Aorta (tissue), 5 donors: ENCODE measurements at regions of chr3 and their contacts with region 1.

Region 1: DNA sequence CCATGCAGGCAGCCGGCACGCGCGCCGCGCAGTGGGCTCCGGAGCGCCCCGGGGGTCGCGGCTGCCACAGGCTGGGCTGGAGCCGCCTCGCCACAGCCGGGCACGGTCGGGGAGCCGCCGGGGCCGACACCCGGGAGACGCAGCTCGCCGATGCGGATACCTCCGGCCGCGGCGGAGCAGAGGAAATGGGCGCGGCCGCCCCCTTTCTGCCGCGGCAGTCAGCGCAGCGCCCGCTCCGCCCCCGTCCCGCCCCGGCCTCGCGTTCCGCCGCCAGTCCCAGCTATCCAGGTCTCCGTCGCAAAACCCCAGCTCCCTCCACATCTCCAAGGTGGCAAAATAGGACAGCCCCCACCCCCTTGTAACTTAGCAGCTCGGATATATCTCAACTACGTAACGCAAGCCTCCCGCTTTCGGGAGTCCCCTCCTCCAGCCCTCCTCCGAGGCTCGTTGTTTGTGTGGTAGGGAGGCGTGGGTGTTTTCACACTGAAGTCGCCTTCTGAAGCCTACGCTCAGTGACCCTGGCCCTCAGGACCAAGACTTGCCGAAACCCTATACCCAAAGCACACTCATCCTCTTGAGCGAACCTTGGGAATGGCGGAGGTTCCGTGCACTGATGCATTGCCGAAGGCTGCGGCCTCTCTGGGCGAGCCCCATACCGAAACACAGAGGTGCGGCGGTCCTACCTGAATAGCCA is at the start of gene SH3BP5:
- DNase-seq: peak; percentile 86 to 93
- ATAC-seq: peak; percentile 92
- H3K4me3 ChIP-seq: peak within 1 kb of the TSS; percentile 50 to 60
- H3K27ac ChIP-seq: peak within 1 kb of the TSS in 1 of 2 donors; percentile 41
- H3K4me1 ChIP-seq: no peaks in the 10 kb centered on the region
- H3K27me3 ChIP-seq: no peaks in the 10 kb centered on the region
- total RNA-seq, gene SH3BP5: 79.9 to 93.1 TPM

Region 2: DNA sequence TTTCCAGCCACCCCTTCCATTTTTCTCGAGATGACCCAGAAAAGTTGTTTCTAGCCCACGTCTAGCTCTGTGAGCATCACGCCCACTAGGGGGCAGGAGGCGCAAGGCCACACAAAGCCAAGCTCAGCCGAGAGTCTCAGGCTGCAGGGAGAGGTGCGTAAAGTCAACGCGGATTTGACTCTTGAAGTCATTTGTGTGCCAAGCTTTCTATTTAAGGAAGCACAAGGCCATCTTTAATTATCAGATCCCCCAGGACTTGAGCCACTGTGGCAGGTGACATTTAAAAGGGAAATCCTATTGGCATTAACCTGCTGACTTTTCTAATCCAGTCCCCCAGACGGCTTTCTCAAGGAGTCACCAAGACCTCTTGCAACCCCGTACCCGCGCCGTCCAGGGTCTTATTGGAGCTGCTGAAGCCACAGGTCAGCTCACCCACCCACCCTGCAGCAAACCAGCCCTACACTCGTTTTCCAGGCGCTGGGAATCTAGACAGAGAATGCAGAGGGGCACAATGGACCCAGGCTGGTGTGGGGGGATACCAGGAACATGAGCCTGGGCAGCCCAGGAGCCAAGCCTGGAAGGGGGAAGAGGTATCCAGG is 64.4 kb before region 1 on chr3:
- intact Hi-C with region 1: loop called (anchors 1 kb)
- DNase-seq: peak; percentile 92 to 95
- ATAC-seq: peak; percentile 88
- H3K4me3 ChIP-seq: no peak overlapping the region
- H3K27ac ChIP-seq: no peak overlapping the region
- H3K4me1 ChIP-seq: no peaks in the 10 kb centered on the region
- H3K27me3 ChIP-seq: no peaks in the 10 kb centered on the region

Region 3: DNA sequence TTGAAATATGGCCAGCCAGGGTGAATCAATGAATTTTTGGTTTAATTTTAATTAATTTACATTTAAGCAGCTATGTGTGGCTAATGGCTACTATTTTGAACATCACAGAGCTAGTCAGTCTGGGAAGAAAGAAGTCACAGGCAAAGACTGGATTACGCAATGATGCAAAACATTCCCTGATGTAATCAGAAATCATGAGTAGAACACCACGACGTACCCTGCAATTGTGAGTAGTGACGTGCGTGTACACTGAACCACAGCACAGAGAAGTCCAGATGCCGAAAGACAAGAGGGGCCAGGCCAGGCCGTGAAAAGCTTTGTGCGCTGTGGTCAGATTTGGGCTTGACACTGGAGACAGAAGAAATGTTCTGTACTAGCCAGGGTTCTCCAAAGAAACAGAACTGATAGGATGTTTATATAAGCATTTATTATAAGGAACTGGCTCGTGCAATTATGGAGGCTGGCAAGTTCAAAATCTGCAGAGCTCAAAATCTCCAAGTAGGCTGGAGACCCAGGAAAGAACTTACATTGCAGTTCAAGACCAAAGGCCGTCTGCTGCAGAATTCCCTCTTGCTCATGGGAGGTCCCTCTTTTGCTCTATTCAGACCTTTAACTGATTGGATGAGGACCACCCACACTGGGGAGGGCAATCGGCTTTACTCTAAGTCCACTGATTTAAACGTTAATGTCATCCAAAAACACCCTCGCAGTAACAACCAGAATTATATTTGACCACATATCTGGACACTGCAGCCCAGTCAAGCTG is 44.8 kb before region 1 on chr3:
- intact Hi-C with region 1: loop called in 1 of 2 experiments (anchors 5 kb)
- DNase-seq: peak in 1 of 2 donors; percentile 79
- ATAC-seq: peak; percentile 89
- H3K4me3 ChIP-seq: no peak overlapping the region
- H3K27ac ChIP-seq: peak overlapping the region in 1 of 2 donors; percentile 29
- H3K4me1 ChIP-seq: no peaks in the 10 kb centered on the region
- H3K27me3 ChIP-seq: no peaks in the 10 kb centered on the region

Region 4: DNA sequence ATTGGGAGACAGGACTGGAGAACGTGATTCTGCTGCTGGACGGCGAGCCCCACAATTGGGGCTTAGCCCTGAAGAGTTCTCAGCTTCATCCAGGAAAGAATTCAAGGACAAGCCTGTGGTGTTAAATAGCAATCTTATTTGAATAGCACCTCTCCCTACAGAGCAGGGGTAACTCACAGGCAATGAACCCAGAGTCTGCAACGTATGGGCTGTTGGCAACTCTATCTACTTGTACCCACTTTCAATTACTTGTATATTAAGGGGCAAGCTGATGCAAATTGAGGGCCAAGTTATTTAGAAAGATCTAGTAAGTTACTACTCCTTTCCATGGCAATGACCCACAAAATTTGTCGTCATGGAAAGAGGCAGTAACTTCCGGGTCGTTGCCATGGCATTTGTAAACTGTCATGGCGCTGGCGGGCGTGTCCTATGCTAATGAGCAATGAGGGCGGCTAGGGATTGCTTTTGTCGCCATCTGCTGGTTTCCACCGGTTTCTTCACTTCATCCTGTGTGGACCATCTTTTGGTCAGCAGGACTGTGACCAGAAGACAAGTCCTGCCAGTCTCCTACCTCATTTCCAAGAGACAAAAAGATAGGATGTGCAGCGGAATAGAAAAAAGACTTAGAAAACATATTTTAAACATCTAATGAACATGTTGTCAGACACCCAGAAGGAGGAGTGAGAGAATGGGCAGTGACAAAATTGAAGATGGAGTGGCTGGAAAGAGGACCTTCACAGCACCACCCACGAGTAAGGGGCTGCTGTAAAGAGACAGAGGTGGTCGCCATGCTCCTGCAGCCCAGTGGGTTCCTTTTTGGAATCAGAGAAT is 45.6 kb after region 1 on chr3:
- intact Hi-C with region 1: loop called (anchors 2 to 5 kb)
- DNase-seq: peak; percentile 97
- ATAC-seq: peak; percentile 98
- H3K4me3 ChIP-seq: no peak overlapping the region
- H3K27ac ChIP-seq: peak overlapping the region in 1 of 2 donors; percentile 70
- H3K4me1 ChIP-seq: no peaks in the 10 kb centered on the region
- H3K27me3 ChIP-seq: no peaks in the 10 kb centered on the region